Activated naive CD4-positive, alpha-beta T cell treated with anti-CD3 and anti-CD28 coated beads for 36 hours (primary cell): ENCODE measurements at regions of chr4 and their contacts with region 1.

Region 1: GRCh38 chr4:37826295-37827029 is at the start of gene PGM2:
- DNase-seq: peak; percentile 92
- H3K4me3 Mint-ChIP-seq: peak within 1 kb of the TSS; percentile 100
- H3K27ac Mint-ChIP-seq: peak within 1 kb of the TSS; percentile 91
- H3K4me1 Mint-ChIP-seq: peaks cover 33% of the 10 kb centered on the region
- H3K27me3 Mint-ChIP-seq: no peaks in the 10 kb centered on the region
- total RNA-seq, gene PGM2: 53.7 to 53.9 TPM

Region 2: GRCh38 chr4:37758226-37758625 is 68.2 kb before region 1 on chr4:
- CTCF ChIA-PET with region 1: no interaction called
- intact Hi-C with region 1: loop called (anchors 2 kb)
- DNase-seq: peak; percentile 15
- H3K4me3 Mint-ChIP-seq: no peak overlapping the region
- H3K27ac Mint-ChIP-seq: no peak overlapping the region
- H3K4me1 Mint-ChIP-seq: peaks cover 26% of the 10 kb centered on the region
- H3K27me3 Mint-ChIP-seq: no peaks in the 10 kb centered on the region

Region 3: DNA sequence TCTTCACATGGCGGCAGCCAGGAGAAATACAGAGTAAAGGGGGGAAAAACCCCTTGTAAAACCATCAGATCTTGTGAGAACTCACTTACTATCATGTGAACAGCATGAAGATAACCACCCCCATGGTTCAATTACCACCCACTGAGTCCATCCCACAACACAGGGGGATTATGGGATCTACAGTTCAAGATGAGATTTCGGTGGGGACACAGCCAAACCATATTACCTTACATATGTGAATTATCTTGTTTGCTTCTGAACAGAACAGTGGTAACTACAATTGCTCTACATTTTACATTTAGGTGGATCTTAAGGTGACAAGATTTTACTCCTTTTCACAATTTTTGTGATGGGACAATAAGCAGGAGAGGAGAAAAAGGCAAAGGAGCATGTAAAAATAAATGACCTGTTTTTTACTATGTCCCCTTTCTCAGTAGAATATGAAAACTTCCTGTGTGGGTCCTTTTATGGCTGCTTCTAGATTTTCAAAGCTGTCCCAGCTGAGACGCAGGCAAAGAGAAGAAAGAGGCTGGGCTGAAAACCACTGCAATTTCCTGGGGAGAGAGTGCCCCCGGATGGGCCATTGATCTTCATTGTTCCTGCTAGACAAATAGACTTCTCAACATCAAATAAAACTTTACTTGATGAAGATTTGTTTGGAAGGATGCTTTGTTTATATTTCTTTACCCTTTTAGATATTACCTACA is 45.9 kb before region 1 on chr4:
- CTCF ChIA-PET with region 1: no interaction called
- intact Hi-C with region 1: no loop called
- DNase-seq: peak; percentile 75
- H3K4me3 Mint-ChIP-seq: no peak overlapping the region
- H3K27ac Mint-ChIP-seq: peak overlapping the region; percentile 66
- H3K4me1 Mint-ChIP-seq: peaks cover 21% of the 10 kb centered on the region
- H3K27me3 Mint-ChIP-seq: no peaks in the 10 kb centered on the region

Region 4: DNA sequence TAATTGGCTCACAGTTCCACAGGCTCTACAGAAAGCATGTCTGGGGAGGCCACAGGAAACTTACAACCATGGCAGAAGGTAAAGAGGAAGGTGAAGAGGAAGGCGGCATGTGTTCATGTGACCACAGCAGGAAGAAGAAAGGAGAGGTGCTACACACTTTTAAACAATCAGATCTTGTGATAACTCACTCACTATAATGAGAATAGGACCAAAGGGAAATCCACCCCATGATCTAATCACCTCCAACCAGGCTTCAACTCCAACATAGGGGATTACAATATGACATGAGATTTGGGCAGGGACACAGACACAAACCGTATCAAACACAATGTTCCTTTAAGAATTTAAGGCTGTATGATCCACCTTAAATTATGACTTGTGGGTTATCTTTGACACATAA is 10.5 kb before region 1 on chr4:
- CTCF ChIA-PET with region 1: no interaction called
- intact Hi-C with region 1: loop called (anchors 1 kb)
- DNase-seq: peak; percentile 31
- H3K4me3 Mint-ChIP-seq: peak overlapping the region; percentile 30
- H3K27ac Mint-ChIP-seq: peak overlapping the region; percentile 76
- H3K4me1 Mint-ChIP-seq: peaks cover 15% of the 10 kb centered on the region
- H3K27me3 Mint-ChIP-seq: no peaks in the 10 kb centered on the region

Region 5: DNA sequence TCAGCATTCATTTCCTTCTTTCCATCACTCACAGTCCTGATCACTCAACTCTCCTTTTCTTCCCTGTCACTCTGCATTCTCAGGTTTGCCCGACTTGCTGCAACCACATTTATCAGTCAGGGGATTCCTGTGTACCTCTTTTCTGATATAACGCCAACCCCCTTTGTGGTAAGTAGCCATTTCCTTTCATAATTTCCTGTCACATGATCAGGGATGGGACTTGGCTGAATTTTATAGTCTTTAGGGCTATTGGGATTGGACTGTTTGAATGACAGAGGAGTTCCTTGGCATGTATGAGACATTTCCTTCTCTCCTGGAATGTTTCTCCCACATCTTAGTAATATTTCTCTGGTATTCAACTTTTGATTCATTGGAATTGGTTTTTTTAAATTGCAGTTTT is 11.0 kb after region 1 on chr4:
- CTCF ChIA-PET with region 1: interaction called, 5 read pairs
- intact Hi-C with region 1: loop called (anchors 1 kb)
- DNase-seq: no peak
- H3K4me3 Mint-ChIP-seq: no peak overlapping the region
- H3K27ac Mint-ChIP-seq: peak overlapping the region; percentile 3
- H3K4me1 Mint-ChIP-seq: peaks cover 24% of the 10 kb centered on the region
- H3K27me3 Mint-ChIP-seq: no peaks in the 10 kb centered on the region

Region 6: DNA sequence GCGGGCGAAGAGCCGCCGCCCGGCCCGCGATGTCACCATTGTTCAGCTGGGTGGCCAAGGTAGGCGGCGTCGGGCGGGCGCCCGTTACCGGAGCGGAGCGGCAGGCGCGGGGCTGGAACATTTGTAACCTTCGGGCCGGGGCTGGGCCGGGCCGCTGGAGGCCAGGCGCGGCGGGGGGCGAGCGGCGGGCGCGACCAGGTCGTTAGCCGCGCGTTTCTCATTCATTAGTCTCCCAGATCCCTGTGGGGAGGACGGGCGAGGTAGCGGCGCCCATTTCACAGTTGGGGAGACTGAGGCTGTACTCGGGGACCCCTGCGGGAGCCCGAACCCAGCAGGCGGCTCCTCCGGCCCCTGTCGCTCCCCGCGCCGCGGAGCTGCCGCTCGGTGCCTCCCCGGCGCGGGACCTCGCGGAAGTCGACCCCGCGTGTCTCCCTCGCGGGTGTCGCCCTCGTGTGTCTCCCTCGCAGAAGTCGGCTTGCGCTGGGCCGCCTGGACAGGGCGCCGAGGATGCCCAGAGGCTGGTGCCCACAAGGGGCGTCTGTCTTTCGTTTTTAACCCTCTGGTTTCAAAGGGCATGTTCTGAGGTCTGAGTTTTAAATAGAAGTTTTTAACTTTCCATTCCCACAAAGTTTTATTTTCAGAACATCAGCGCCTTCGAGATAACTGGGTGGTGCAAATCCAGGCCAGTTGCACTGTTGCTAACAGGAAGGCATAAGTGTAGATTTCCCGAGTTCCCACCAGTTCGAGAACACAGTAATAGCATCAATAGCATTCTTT is 151.2 kb after region 1 on chr4:
- CTCF ChIA-PET with region 1: no interaction called
- intact Hi-C with region 1: loop called (anchors 1 kb)
- DNase-seq: peak; percentile 83
- H3K4me3 Mint-ChIP-seq: peak overlapping the region; percentile 77
- H3K27ac Mint-ChIP-seq: peak overlapping the region; percentile 26
- H3K4me1 Mint-ChIP-seq: peaks cover 27% of the 10 kb centered on the region
- H3K27me3 Mint-ChIP-seq: no peaks in the 10 kb centered on the region